ENCODE measurements at regions of chr12 and their contacts with region 1.

Region 1: GRCh38 chr12:73547421-73547820 is 990.2 kb upstream of the ATXN7L3B start:
- DNase-seq: peak; percentile 62
- ATAC-seq: peak; percentile 70
- H3K4me3 ChIP-seq: no peak overlapping the region
- H3K27ac ChIP-seq: no peak overlapping the region
- H3K4me1 ChIP-seq: peaks cover 7% of the 10 kb centered on the region
- H3K27me3 ChIP-seq: no peaks in the 10 kb centered on the region
- CTCF ChIP-seq: no peak

Region 2: GRCh38 chr12:73863546-73863945 is 316.1 kb after region 1 on chr12:
- CTCF ChIA-PET with region 1: no interaction called
- POLR2A ChIA-PET with region 1: no interaction called
- intact Hi-C with region 1: loop called (anchors 10 kb)
- DNase-seq: peak; percentile 85
- ATAC-seq: peak; percentile 83
- H3K4me3 ChIP-seq: no peak overlapping the region
- H3K27ac ChIP-seq: peak overlapping the region; percentile 53
- H3K4me1 ChIP-seq: peaks cover 17% of the 10 kb centered on the region
- H3K27me3 ChIP-seq: no peaks in the 10 kb centered on the region
- CTCF ChIP-seq: no peak

Measured in PC-3 (cell line).